ENCODE measurements at regions of chr1 and their contacts with region 1.

Region 1: DNA sequence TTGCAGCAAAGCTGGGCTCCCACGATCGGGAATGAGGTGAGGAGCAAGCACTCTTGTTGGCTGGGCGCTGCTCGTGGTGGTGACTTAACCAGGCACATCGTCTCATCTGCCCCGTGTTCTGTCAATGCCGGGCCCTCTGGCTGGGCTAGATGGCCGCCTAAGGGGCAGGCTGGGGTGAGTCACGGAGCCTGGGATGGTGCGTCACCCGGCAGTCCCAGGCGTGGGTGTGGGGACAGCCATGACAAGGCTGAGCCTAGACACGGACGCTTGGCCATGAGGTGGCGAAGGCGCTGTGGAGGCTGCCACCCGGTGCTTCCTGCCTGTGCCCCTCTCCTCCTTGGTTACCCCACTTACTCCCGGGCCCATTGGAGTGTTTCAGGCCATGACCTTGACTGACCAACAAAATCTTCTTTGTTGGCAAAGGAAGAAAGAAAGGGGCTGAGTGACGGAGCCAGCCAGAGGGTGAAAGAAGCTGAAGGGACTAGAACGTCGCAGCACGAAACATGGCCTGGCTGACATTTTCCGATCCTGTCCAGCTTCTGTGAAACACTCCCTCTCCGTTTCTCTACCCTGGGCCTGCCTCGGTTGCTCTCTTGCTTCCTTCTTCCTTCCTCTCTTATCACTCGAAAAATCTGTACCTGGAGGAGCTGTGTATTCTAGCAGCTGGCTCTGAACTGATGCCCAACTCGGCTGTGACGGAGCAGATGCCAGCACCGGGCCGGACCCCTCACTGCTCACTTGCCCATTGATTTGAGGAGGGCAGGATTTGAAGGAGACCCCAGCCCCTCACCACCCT is 596 bp downstream of the CD247 start:
- DNase-seq: peak; percentile 93
- H3K4me3 Mint-ChIP-seq: peak overlapping the region; percentile 99
- H3K27ac Mint-ChIP-seq: peak overlapping the region; percentile 100
- H3K4me1 Mint-ChIP-seq: peaks cover 39% of the 10 kb centered on the region
- H3K27me3 Mint-ChIP-seq: peaks cover 7% of the 10 kb centered on the region

Region 2: DNA sequence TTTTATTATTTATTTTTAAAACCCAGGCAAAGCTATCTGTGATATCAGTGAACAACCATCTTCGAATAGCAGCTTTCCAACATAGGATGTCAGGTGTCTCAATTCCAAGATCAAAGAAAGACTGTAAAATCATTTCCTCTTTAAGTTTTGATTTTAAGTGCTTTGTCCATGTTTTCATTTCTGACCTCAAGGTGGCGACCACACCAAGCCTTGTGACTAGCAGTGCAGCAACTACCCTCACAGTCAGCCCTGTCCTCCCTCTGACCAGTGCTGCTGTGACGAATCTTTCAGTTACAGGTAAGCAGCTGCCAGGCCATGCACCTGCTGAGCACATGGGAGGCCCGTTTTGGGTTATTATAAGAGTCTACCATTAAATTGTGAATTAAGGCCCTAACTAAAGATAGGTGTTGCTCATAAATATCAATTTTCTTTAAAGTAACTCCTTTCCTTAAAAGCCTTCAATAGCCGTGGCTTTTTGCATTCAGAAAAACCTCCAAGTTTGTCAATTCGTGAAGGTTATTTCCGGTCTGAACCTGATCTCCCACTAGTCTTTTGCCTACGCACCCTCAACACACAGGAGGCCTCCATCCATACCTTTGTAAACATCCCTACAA is 116.4 kb before region 1 on chr1:
- intact Hi-C with region 1: loop called (anchors 1 kb)
- DNase-seq: peak; percentile 83
- H3K4me3 Mint-ChIP-seq: no peak overlapping the region
- H3K27ac Mint-ChIP-seq: no peak overlapping the region
- H3K4me1 Mint-ChIP-seq: no peaks in the 10 kb centered on the region
- H3K27me3 Mint-ChIP-seq: no peaks in the 10 kb centered on the region

Region 3: GRCh38 chr1:167430134-167430856 is 87.4 kb before region 1 on chr1:
- intact Hi-C with region 1: no loop called
- DNase-seq: peak; percentile 60
- H3K4me3 Mint-ChIP-seq: no peak overlapping the region
- H3K27ac Mint-ChIP-seq: peak overlapping the region; percentile 49
- H3K4me1 Mint-ChIP-seq: peaks cover 13% of the 10 kb centered on the region
- H3K27me3 Mint-ChIP-seq: no peaks in the 10 kb centered on the region

Region 4: GRCh38 chr1:167447521-167448136 is 70.1 kb before region 1 on chr1:
- intact Hi-C with region 1: loop called (anchors 1 kb)
- DNase-seq: peak; percentile 92
- H3K4me3 Mint-ChIP-seq: peak overlapping the region; percentile 79
- H3K27ac Mint-ChIP-seq: peak overlapping the region; percentile 93
- H3K4me1 Mint-ChIP-seq: peaks cover 66% of the 10 kb centered on the region
- H3K27me3 Mint-ChIP-seq: no peaks in the 10 kb centered on the region

Region 5: GRCh38 chr1:167474191-167474716 is 43.5 kb before region 1 on chr1:
- intact Hi-C with region 1: loop called (anchors 2 kb)
- DNase-seq: no peak
- H3K4me3 Mint-ChIP-seq: peak overlapping the region; percentile 61
- H3K27ac Mint-ChIP-seq: peak overlapping the region; percentile 70
- H3K4me1 Mint-ChIP-seq: peaks cover 67% of the 10 kb centered on the region
- H3K27me3 Mint-ChIP-seq: no peaks in the 10 kb centered on the region

Region 6: DNA sequence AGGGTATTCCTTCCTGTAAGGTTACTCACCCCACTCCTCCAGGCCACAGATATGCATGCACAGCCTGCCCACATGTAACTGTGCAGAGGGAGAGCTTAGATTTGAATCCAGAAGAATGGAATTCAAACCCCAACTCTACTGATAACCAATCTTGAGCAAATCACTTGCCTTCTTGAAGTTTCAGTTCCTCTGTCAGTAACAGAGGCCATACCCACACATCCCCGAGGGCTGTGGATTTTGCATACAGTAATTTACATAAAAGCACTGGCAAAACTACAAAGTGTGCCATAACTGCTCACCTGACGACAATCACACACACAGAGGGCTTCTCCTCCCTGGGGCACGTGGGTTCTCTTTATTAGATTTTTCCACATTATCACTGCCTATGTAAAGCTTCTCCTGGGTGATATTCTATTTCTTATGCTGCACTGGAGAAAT is 18.1 kb before region 1 on chr1:
- intact Hi-C with region 1: loop called (anchors 1 kb)
- DNase-seq: peak; percentile 77
- H3K4me3 Mint-ChIP-seq: peak overlapping the region; percentile 76
- H3K27ac Mint-ChIP-seq: peak overlapping the region; percentile 95
- H3K4me1 Mint-ChIP-seq: peaks cover 93% of the 10 kb centered on the region
- H3K27me3 Mint-ChIP-seq: no peaks in the 10 kb centered on the region

Region 7: GRCh38 chr1:167553136-167554027 is 35.6 kb after region 1 on chr1 and contains the start of gene CREG1:
- intact Hi-C with region 1: loop called (anchors 1 kb)
- DNase-seq: peak; percentile 98
- H3K4me3 Mint-ChIP-seq: peak within 1 kb of the TSS; percentile 88
- H3K27ac Mint-ChIP-seq: no peak within 1 kb of the TSS
- H3K4me1 Mint-ChIP-seq: peaks cover 26% of the 10 kb centered on the region
- H3K27me3 Mint-ChIP-seq: peaks cover 6% of the 10 kb centered on the region
- total RNA-seq, gene CREG1: 12.3 and 13.6 TPM in 2 replicates

Measured in activated CD4-positive, alpha-beta T cell treated with anti-CD3 and anti-CD28 coated beads, Interleukin-2, amount 10 ng/mL, durations not matched to agents 24 days and 14 days (primary cell).